PC-9 (cell line): ENCODE measurements at regions of chr10 and their contacts with region 1.

Region 1: GRCh38 chr10:84264611-84265141 is 19.8 kb downstream of the RGR start:
- DNase-seq: peak in 1 of 2 experiments; percentile 68
- H3K4me3 ChIP-seq: no peak overlapping the region
- H3K27ac ChIP-seq: no peak overlapping the region
- H3K4me1 ChIP-seq: peaks cover 7% of the 10 kb centered on the region
- H3K27me3 ChIP-seq: peaks cover 42% of the 10 kb centered on the region
- CTCF ChIP-seq: peak; percentile 98

Region 2: DNA sequence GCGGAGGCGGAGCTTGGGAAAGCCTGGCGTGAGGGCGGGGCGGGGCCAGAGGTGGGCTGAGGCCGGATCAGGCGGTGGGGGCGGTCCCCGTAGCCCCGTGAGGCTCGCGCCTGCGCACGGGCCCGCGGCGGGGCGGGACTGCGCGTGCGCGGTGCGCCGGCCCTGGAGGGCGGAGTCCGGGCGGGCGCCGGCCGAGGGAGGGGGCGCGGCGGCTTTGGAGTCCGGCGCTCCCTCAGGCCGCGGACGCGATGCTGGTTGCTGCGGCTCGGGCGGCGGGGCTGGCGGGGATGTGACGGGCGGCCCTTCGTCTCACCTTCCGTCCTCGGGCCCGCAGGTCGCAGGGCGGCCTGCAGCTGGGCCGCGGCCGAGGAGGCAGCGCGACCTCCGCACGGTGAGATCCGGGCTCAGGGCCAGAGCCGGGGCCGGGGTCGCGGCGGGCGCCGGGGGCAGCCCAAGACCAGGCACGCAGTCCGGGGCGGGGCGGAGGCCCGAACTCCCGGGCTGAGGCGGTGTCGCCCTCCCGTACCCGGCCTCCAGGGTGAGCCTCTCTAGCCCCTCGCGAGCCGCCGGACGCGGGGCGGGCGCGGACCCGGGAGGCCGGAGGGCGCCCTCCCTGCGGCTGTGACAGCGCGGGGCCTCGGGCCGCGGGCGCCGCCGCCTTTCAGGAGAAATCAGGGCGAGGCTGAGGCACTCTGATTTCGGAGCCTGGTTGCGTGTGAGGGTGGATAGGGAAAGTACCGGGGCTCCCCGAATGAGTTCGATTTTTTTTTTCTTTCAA is 63.9 kb after region 1 on chr10 and contains the start of gene CCSER2:
- CTCF ChIA-PET with region 1: no interaction called
- POLR2A ChIA-PET with region 1: no interaction called
- intact Hi-C with region 1: no loop called
- DNase-seq: peak; percentile 48 to 99
- H3K4me3 ChIP-seq: peak within 1 kb of the TSS; percentile 77
- H3K27ac ChIP-seq: peak within 1 kb of the TSS; percentile 51
- H3K4me1 ChIP-seq: peaks cover 15% of the 10 kb centered on the region
- H3K27me3 ChIP-seq: no peaks in the 10 kb centered on the region
- CTCF ChIP-seq: no peak
- total RNA-seq, gene CCSER2: 42.2 and 56.6 TPM in 2 replicates

Region 3: GRCh38 chr10:84352251-84352842 is 87.7 kb after region 1 on chr10:
- CTCF ChIA-PET with region 1: no interaction called
- POLR2A ChIA-PET with region 1: no interaction called
- intact Hi-C with region 1: loop called (anchors 1 kb)
- DNase-seq: peak; percentile 51 to 52
- H3K4me3 ChIP-seq: no peak overlapping the region
- H3K27ac ChIP-seq: no peak overlapping the region
- H3K4me1 ChIP-seq: peaks cover 10% of the 10 kb centered on the region
- H3K27me3 ChIP-seq: no peaks in the 10 kb centered on the region
- CTCF ChIP-seq: peak; percentile 77

Region 4: GRCh38 chr10:84375011-84375410 is 110.3 kb after region 1 on chr10:
- CTCF ChIA-PET with region 1: interaction called, 3 read pairs
- POLR2A ChIA-PET with region 1: no interaction called
- intact Hi-C with region 1: loop called (anchors 1 kb)
- DNase-seq: peak; percentile 27 to 61
- H3K4me3 ChIP-seq: no peak overlapping the region
- H3K27ac ChIP-seq: no peak overlapping the region
- H3K4me1 ChIP-seq: peaks cover 10% of the 10 kb centered on the region
- H3K27me3 ChIP-seq: no peaks in the 10 kb centered on the region
- CTCF ChIP-seq: peak; percentile 87